Activated CD4-positive, alpha-beta memory T cell treated with anti-CD3 and anti-CD28 coated beads for 36 hours (primary cell): ENCODE measurements at regions of chr7 and their contacts with region 1.

Region 1: GRCh38 chr7:151876899-151877777 is at the start of gene PRKAG2:
- DNase-seq: peak; percentile 74
- H3K4me3 Mint-ChIP-seq: peak within 1 kb of the TSS; percentile 96
- H3K27ac Mint-ChIP-seq: peak within 1 kb of the TSS; percentile 87
- H3K4me1 Mint-ChIP-seq: peaks cover 14% of the 10 kb centered on the region
- H3K27me3 Mint-ChIP-seq: no peaks in the 10 kb centered on the region
- total RNA-seq, gene PRKAG2: 23.5 to 25.6 TPM

Region 2: GRCh38 chr7:151519765-151520418 is 357.2 kb before region 1 on chr7 and contains the start of gene RHEB:
- CTCF ChIA-PET with region 1: no interaction called
- POLR2A ChIA-PET with region 1: interaction called, 4 read pairs
- intact Hi-C with region 1: loop called (anchors 1 kb)
- DNase-seq: peak; percentile 99
- H3K4me3 Mint-ChIP-seq: peak within 1 kb of the TSS; percentile 92
- H3K27ac Mint-ChIP-seq: peak within 1 kb of the TSS; percentile 96
- H3K4me1 Mint-ChIP-seq: peaks cover 35% of the 10 kb centered on the region
- H3K27me3 Mint-ChIP-seq: no peaks in the 10 kb centered on the region
- total RNA-seq, gene RHEB: 62.0 to 64.6 TPM

Region 3: DNA sequence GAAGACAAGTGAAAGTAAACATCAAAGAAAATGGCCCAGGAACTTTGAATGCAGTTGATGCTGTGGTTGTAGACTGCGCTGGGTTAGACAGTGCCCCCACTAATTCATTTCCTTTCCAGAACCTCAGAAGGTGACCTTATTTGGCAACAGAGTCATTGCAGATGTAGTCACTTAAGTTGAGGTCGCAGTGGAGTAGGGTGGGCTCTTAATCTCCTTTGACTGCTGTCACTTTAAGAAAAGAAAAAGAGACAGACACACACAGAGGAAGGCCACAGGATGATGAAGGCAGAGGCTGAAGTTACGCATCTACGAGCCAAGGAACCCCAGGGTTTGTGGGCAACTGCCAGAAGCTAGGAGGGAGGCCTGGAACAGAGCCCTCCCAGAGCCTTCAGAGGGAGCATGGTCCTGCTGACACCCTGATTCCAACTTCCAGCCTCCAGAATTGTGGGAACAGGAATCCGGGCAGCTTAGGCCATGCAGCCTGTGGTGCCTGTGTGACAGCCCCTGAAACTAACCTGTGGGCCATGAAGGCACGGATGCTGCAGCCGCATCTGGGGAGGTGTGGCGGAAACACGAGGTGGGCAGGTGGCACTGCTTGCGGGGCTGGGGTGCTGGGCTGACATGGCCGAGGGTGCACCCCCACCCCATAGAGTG is 107.8 kb before region 1 on chr7:
- CTCF ChIA-PET with region 1: no interaction called
- POLR2A ChIA-PET with region 1: no interaction called
- intact Hi-C with region 1: no loop called
- DNase-seq: peak; percentile 61
- H3K4me3 Mint-ChIP-seq: peak overlapping the region; percentile 24
- H3K27ac Mint-ChIP-seq: peak overlapping the region; percentile 87
- H3K4me1 Mint-ChIP-seq: peaks cover 47% of the 10 kb centered on the region
- H3K27me3 Mint-ChIP-seq: no peaks in the 10 kb centered on the region

Region 4: DNA sequence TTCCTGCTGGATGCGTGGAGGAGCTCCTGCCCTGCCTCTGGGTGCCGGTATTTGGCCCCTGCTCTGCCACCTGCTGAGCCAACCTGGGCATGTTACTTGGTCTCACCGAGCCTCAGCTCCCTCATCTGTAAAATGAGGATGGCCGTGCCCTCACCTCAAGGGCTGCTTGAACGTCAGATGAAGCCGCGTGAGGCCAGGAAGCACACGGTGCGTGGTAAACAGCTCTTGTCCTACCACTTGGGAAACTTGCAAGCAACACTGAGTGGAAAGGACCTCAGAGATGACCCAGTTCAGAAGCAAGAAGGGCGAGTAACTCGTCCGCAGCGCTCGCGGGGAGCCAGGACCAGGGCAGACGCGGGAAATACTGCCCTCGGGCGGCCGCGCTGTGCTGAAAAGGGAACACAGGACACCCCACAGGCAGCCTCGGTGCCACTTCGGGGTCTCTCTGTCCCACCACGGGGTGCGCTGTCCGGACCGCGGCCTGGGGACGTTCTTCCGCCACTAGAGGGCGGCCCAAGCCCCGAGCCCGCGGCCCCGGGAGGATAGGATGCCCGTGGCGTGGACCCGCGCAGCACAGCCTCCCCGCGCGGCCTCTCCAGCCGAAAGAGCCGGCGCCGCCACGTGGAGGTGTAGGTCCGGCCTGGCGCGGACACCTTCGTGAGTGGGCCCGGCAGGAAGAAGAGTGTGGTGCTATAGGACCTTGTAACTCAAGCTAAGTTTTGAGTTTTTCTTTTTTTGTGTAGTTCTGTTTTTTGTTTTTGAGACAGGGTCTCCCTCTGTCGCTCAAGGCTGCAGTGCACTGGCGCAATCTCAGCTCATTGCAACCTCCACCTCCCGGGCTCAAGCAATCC is 94.3 kb before region 1 on chr7:
- CTCF ChIA-PET with region 1: interaction called, 35 read pairs
- POLR2A ChIA-PET with region 1: interaction called, 4 read pairs
- intact Hi-C with region 1: no loop called
- DNase-seq: peak; percentile 80
- H3K4me3 Mint-ChIP-seq: peak overlapping the region; percentile 76
- H3K27ac Mint-ChIP-seq: no peak overlapping the region
- H3K4me1 Mint-ChIP-seq: peaks cover 12% of the 10 kb centered on the region
- H3K27me3 Mint-ChIP-seq: no peaks in the 10 kb centered on the region

Region 5: GRCh38 chr7:151838861-151839391 is 38.2 kb before region 1 on chr7:
- CTCF ChIA-PET with region 1: interaction called, 4 read pairs
- POLR2A ChIA-PET with region 1: no interaction called
- intact Hi-C with region 1: loop called (anchors 2 kb)
- DNase-seq: peak; percentile 69
- H3K4me3 Mint-ChIP-seq: peak overlapping the region; percentile 48
- H3K27ac Mint-ChIP-seq: peak overlapping the region; percentile 62
- H3K4me1 Mint-ChIP-seq: peaks cover 27% of the 10 kb centered on the region
- H3K27me3 Mint-ChIP-seq: no peaks in the 10 kb centered on the region

Region 6: GRCh38 chr7:151954866-151955820 is 78.0 kb after region 1 on chr7:
- CTCF ChIA-PET with region 1: no interaction called
- POLR2A ChIA-PET with region 1: no interaction called
- intact Hi-C with region 1: no loop called
- DNase-seq: no peak
- H3K4me3 Mint-ChIP-seq: no peak overlapping the region
- H3K27ac Mint-ChIP-seq: no peak overlapping the region
- H3K4me1 Mint-ChIP-seq: no peaks in the 10 kb centered on the region
- H3K27me3 Mint-ChIP-seq: peaks cover 1% of the 10 kb centered on the region

Region 7: GRCh38 chr7:152025077-152025936 is 148.2 kb after region 1 on chr7 and contains the start of gene GALNT11:
- CTCF ChIA-PET with region 1: no interaction called
- POLR2A ChIA-PET with region 1: no interaction called
- intact Hi-C with region 1: loop called (anchors 5 kb)
- DNase-seq: peak; percentile 89
- H3K4me3 Mint-ChIP-seq: peak within 1 kb of the TSS; percentile 80
- H3K27ac Mint-ChIP-seq: peak within 1 kb of the TSS; percentile 65
- H3K4me1 Mint-ChIP-seq: peaks cover 32% of the 10 kb centered on the region
- H3K27me3 Mint-ChIP-seq: no peaks in the 10 kb centered on the region
- total RNA-seq, gene GALNT11: 17.7 to 19.7 TPM

Region 8: DNA sequence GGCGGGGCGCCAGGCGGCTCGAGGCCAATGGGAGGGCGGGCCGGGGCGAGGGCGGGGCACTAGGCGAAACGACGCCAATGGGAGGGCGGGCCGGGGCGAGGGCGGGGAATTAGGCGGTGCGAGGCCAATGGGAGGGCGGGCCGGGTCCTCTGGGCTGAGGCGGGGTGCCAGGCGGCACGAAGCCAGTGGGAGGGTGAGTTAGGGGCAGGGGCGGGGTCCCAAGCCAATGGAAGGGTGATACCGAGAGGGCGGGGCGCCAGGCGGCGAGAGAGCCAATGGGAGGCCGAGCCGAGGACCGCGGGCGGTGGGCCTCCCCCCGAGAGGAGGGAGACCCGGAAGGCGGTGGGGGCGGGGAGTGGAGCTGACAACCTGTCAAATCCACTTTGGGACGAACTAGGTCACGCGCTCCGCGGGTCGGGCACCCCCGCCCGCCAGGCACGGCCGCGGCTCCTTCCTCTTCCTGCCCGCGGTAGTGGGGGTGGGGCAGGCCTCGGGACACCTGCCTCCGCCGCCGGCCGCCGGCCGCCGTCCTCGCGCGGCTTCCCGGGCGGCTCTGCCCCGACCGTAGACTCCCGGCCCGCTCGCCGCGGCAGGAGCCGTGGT is 586.7 kb after region 1 on chr7:
- CTCF ChIA-PET with region 1: no interaction called
- POLR2A ChIA-PET with region 1: no interaction called
- intact Hi-C with region 1: loop called (anchors 5 kb)
- DNase-seq: peak; percentile 100
- H3K4me3 Mint-ChIP-seq: peak overlapping the region; percentile 91
- H3K27ac Mint-ChIP-seq: no peak overlapping the region
- H3K4me1 Mint-ChIP-seq: peaks cover 6% of the 10 kb centered on the region
- H3K27me3 Mint-ChIP-seq: no peaks in the 10 kb centered on the region